Psoas muscle (tissue), 8 donors: ENCODE measurements at regions of chr11 and their contacts with region 1.

Region 1: GRCh38 chr11:9137293-9138132 is 46.1 kb upstream of the SCUBE2 start:
- DNase-seq: peak; percentile 70 to 77
- ATAC-seq: peak; percentile 89 to 97 (median 92)
- H3K4me3 ChIP-seq: no peak overlapping the region
- H3K27ac ChIP-seq: no peak overlapping the region
- H3K4me1 ChIP-seq: no peaks in the 10 kb centered on the region
- H3K27me3 ChIP-seq: no peaks in the 10 kb centered on the region
- CTCF ChIP-seq: peak; percentile 89

Region 2: GRCh38 chr11:9015677-9016076 is 121.8 kb before region 1 on chr11:
- intact Hi-C with region 1: loop called (anchors 1 to 2 kb)
- DNase-seq: peak; percentile 52 to 66
- ATAC-seq: peak; percentile 83 to 96 (median 92)
- H3K4me3 ChIP-seq: no peak overlapping the region
- H3K27ac ChIP-seq: no peak overlapping the region
- H3K4me1 ChIP-seq: no peaks in the 10 kb centered on the region
- H3K27me3 ChIP-seq: no peaks in the 10 kb centered on the region
- CTCF ChIP-seq: peak; percentile 75